ENCODE measurements at regions of chr5 and their contacts with region 1.

Region 1: DNA sequence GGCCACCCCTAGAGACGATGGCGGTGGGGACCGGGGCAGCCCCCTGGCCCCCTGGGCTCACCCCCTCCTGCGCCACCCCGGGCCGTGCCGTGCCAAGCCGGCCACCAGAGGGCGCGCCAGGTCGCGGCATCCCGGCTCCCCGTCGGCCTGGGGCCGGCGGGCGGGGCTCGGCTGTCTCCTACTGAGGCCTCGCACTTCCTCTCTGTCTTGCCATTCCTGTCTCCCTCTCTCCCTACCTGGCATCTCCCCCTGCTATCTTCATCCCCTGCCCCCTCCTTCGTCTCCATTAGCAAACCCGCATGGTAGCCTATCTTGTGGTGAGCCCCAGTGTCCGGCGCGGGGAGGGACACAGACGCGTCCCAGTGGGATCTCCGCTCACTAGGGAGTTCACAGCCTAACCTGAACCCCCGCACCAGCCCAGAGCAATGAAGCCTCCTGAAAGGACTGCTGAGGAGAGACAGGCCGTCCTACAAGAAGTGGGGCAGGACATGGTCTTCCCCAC is 29.8 kb upstream of the FABP6 start:
- DNase-seq: peak; percentile 35 to 86 (median 66)
- ATAC-seq: peak; percentile 93
- H3K4me3 ChIP-seq: peak overlapping the region; percentile 52
- H3K4me3 Mint-ChIP-seq: peak overlapping the region; percentile 54 to 88 (median 78)
- H3K27ac ChIP-seq: no peak overlapping the region
- H3K27ac Mint-ChIP-seq: peak overlapping the region in 2 of 9 donors; percentile 53 to 74
- H3K4me1 ChIP-seq: peaks cover 0 to 3% of the 10 kb centered on the region in 2 donors
- H3K4me1 Mint-ChIP-seq: peaks cover 0 to 11% (median 3%) of the 10 kb centered on the region in 7 donors
- H3K27me3 ChIP-seq: no peaks in the 10 kb centered on the region
- H3K27me3 Mint-ChIP-seq: peaks cover 0 to 15% (median 10%) of the 10 kb centered on the region in 5 donors

Region 2: DNA sequence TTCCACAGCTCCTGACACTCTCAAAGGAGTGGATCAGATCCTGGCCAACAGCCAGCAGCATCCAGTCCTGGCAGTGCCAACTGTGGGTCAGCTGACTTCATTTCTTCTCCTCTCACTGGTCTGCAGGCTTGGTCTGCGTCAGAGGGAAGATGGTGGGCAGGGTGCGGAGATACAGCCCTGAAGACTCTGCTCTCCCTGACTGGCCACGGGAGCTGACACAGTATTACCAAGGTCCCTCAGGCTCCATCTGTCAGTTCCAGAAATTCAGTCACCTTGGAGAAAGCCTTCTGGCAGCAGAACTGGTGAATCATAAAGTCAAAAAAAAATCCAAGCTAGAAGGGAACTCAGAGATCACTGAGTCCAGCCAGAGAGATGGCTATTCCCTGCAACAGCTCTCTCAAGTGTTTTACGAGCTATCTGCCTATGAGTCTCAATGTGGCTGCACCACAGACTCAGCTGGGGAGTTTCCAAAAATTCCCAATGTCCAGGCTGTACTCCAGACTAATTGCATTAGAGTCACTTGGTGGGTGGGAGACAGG is 143.0 kb after region 1 on chr5:
- CTCF ChIA-PET with region 1: interaction called, 4 read pairs
- POLR2A ChIA-PET with region 1: no interaction called
- intact Hi-C with region 1: loop called in 1 of 2 experiments (anchors 1 kb)
- DNase-seq: no peak
- ATAC-seq: no peak
- H3K4me3 ChIP-seq: no peak overlapping the region
- H3K4me3 Mint-ChIP-seq: no peak overlapping the region
- H3K27ac ChIP-seq: no peak overlapping the region
- H3K27ac Mint-ChIP-seq: no peak overlapping the region
- H3K4me1 ChIP-seq: no peaks in the 10 kb centered on the region
- H3K4me1 Mint-ChIP-seq: peaks cover 0 to 4% (median 0%) of the 10 kb centered on the region in 7 donors
- H3K27me3 ChIP-seq: no peaks in the 10 kb centered on the region
- H3K27me3 Mint-ChIP-seq: peaks cover 0 to 4% (median 0%) of the 10 kb centered on the region in 5 donors

Region 3: DNA sequence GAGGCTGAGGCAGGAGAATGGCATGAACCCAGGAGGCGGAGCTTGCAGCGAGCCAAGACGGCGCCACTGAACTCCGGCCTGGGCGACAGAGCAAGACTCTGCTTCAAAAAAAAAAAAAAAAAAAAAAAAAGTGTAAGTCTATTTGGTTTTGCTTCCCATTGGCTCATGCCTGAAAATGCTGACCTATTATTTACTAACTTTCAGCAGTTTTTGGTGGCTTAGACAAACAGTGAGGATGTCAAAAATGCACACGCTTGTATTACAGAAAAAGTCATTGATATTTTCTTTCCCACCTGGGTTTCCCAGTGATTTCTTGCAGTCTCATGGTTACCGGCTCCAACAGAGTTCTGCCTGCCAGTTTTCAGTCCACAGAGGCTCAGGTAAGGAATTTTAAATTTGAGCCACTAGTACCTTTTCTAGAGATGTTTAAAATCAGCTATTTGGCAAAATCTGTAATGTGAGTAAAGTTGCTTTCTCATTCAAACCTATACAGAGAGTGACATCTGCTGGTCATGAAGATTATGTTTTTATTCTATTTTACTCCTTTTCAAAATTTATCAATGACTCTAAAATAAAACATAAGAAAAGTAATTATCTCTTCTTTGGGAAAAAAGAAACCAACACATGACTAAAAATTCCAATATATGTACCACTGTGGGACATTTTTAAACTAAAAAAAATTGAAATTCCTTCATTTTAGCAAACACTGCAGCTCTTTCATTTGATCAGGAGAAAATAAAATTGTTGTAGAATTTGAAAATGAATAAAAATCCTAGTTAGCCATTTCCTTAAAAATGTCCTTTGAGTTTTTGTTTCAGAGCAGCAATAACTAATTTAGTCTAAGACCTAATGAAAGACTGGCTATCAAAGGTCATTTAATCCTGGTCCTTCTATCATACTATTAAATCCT is 191.6 kb after region 1 on chr5:
- CTCF ChIA-PET with region 1: no interaction called
- POLR2A ChIA-PET with region 1: no interaction called
- intact Hi-C with region 1: loop called (anchors 1 kb)
- DNase-seq: peak in 2 of 9 donors; percentile 17 to 29
- ATAC-seq: no peak
- H3K4me3 ChIP-seq: no peak overlapping the region
- H3K4me3 Mint-ChIP-seq: no peak overlapping the region
- H3K27ac ChIP-seq: no peak overlapping the region
- H3K27ac Mint-ChIP-seq: no peak overlapping the region
- H3K4me1 ChIP-seq: no peaks in the 10 kb centered on the region
- H3K4me1 Mint-ChIP-seq: no peaks in the 10 kb centered on the region
- H3K27me3 ChIP-seq: no peaks in the 10 kb centered on the region
- H3K27me3 Mint-ChIP-seq: peaks cover 0 to 5% (median 0%) of the 10 kb centered on the region in 5 donors

Region 4: DNA sequence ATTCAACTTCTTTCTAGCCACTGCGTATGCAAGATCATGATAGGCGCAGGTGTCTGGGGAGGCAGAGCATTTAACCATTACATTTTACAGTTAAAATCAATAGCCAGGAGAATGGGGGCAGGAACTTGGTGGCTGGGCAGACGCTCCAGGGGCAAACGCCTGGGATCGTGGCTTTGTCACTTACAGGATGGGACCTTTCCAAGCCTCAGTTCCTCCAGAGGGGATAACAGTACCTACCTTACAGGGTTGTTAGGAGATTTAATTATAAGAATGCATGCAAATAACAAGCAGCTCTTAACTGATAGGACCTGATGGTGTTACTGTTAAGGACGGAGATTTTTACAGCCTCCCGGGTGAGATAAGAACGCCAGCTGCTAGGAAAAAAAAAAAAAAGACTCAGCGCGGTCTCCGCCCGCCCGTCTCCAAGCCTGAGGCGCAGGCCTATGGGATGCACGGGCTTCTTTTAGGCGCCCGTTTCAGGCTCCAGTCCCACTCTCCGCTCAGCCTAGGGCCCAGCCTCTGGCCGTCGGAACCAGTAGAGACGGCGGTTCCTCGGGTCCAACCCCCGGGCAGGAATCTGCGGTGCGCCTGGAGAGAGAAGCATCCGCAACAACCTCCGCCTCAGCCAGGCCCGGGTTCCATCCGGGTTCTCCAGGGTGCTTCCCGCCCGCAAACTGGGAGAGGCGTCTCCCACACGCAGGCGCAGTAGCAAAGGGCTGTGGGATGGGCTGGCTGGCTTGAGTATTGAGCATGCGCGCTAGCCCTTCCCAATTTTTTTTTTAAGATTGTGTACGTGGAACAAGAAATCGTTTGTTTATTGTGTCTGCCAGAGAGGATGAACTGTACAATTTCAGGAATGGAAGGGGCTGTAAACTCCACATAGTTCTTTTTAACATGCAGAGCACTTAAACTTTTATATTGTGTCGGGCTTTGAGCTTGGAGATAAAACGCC is 200.2 kb after region 1 on chr5 and contains the start of gene FAM200C:
- CTCF ChIA-PET with region 1: no interaction called
- POLR2A ChIA-PET with region 1: no interaction called
- intact Hi-C with region 1: loop called in 1 of 2 experiments (anchors 2 kb)
- DNase-seq: peak; percentile 32 to 82 (median 40)
- ATAC-seq: peak; percentile 78
- H3K4me3 ChIP-seq: peak within 1 kb of the TSS; percentile 73
- H3K4me3 Mint-ChIP-seq: peak within 1 kb of the TSS; percentile 86 to 94 (median 92)
- H3K27ac ChIP-seq: peak within 1 kb of the TSS; percentile 67
- H3K27ac Mint-ChIP-seq: peak within 1 kb of the TSS; percentile 65 to 88 (median 82)
- H3K4me1 ChIP-seq: peaks cover 4 to 7% of the 10 kb centered on the region in 2 donors
- H3K4me1 Mint-ChIP-seq: peaks cover 8 to 23% (median 20%) of the 10 kb centered on the region in 7 donors
- H3K27me3 ChIP-seq: no peaks in the 10 kb centered on the region
- H3K27me3 Mint-ChIP-seq: no peaks in the 10 kb centered on the region
- total RNA-seq, gene FAM200C: 0.22 to 0.94 (median 0.78) TPM in 4 of 5 experiments, not detected in the other